PC-9 (cell line): ENCODE measurements at regions of chr6 and their contacts with region 1.

Region 1: DNA sequence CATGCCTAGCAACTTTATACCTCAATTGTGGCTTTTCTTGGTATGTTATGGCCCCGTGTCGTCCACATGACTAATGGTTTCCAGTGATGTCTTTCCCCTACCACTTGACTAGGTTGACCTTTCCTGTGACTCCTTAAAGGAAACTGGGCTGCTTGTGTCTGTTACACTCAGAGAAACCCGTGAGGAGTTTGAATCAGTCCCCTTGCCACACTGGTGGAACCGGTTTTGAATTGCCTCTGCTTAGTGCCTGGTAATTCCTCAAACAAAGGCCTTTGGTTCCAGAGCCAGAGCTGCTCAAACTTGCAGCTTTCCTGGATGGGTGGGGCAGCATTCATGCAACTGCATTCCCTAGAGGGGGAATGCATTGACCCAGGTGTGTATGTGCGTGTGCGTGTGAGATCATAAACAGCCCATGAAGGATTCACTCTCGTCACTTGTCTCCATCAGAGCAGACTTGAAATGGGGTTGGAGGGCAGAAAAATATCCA is 22.0 kb downstream of the ECT2L start:
- DNase-seq: peak; percentile 87 to 100
- H3K4me3 ChIP-seq: peak overlapping the region; percentile 15; the same call in 1 of the 2 replicates
- H3K27ac ChIP-seq: peak overlapping the region; percentile 93
- H3K4me1 ChIP-seq: peaks cover 51% of the 10 kb centered on the region
- H3K27me3 ChIP-seq: no peaks in the 10 kb centered on the region
- CTCF ChIP-seq: no peak

Region 2: DNA sequence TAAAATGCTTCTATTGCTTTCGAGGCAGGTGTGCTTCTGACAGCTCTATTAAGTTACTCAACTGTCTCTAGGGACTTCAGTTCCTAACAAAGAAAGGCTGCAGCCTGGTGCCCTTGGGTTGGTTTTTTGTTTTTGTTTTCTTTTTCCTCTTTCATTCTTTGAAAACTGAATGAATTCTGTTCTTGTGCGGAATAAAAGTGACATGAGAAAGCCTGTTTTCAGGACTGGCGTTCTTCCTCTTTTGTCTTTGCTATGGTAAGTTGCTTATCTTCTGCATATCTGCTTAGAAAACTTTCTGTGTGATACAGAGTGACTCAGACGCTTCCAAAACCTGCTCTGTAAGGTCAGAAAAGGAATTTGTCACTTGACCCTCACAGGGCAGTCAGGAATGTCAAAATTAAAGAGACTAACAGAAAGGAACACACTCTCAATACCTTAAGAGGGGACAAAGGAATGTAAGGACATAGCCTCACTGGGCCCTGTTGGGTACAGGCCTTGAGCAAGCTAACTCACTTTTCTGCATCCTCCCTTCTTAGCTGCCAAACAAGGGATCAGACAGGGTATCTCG is 262.4 kb before region 1 on chr6:
- CTCF ChIA-PET with region 1: interaction called, 16 read pairs
- POLR2A ChIA-PET with region 1: no interaction called
- intact Hi-C with region 1: no loop called
- DNase-seq: peak; percentile 38 to 97
- H3K4me3 ChIP-seq: peak overlapping the region; percentile 23; the same call in 1 of the 2 replicates
- H3K27ac ChIP-seq: peak overlapping the region; percentile 56
- H3K4me1 ChIP-seq: peaks cover 35% of the 10 kb centered on the region
- H3K27me3 ChIP-seq: no peaks in the 10 kb centered on the region
- CTCF ChIP-seq: no peak

Region 3: DNA sequence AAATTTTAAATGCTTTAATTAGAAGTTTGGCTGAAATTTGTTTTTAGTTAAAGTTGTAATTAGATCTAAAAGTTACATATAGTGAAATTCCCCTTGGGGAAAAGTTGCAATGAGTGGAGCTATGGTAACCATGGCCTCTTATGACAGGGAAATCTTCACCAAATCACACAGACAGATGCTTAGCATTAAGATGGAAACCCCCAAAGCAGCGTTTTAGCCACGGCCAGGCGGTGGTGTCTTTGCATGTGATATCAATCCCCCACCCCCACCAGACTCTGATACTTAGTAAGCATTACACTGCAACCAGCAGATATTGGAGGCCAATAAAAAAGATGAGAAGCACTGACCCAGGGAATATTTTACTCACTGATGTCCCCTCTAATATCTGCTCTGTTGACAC is 94.4 kb after region 1 on chr6:
- CTCF ChIA-PET with region 1: no interaction called
- POLR2A ChIA-PET with region 1: no interaction called
- intact Hi-C with region 1: no loop called
- DNase-seq: no peak
- H3K4me3 ChIP-seq: no peak overlapping the region
- H3K27ac ChIP-seq: no peak overlapping the region
- H3K4me1 ChIP-seq: no peaks in the 10 kb centered on the region
- H3K27me3 ChIP-seq: no peaks in the 10 kb centered on the region
- CTCF ChIP-seq: no peak

Region 4: GRCh38 chr6:138923561-138923960 is 105.7 kb after region 1 on chr6:
- CTCF ChIA-PET with region 1: no interaction called
- POLR2A ChIA-PET with region 1: no interaction called
- intact Hi-C with region 1: loop called (anchors 10 kb)
- DNase-seq: no peak
- H3K4me3 ChIP-seq: no peak overlapping the region
- H3K27ac ChIP-seq: no peak overlapping the region
- H3K4me1 ChIP-seq: no peaks in the 10 kb centered on the region
- H3K27me3 ChIP-seq: no peaks in the 10 kb centered on the region
- CTCF ChIP-seq: no peak

Region 5: DNA sequence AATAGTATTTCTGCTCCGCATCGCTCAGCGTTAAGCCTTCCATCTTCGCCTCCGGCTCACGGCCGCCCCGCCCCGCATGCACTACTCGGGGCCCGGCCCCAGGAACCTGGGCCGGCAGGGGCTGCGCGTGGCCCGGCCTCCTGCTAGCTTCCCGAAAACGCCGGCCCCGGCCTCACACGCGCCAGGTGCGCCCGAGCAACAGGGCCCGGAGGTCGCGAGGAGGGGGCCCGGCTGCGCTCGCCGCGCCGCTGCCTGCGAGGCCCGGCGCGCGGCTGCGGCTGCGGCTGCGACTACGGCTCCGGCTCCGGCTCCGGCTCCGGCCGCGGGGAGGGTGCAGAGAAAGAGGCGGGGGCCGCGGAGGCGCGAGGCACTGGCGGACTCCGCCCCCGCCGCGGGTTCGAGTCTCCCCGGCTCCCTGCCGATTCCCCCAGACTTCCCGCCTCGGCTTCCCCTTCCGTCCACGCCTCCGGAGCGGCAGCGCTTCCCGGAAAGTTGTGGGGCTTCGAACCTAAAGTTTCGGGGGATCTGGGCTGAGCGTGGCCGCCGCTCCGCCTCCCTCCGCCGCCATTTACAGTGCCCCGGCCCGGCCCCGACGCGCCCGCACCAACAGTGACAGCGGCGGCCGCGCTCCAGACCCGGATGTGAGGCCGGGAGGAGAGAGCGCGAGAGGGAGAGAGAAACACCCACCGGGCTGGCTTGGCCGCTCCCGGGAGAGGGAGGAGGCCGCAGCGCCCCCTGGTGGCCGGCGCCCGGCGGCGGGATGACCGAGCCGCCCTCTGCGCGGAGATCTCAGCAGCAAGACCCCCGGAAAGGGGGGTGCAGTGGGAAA is 170.0 kb after region 1 on chr6 and contains the start of gene REPS1:
- CTCF ChIA-PET with region 1: no interaction called
- POLR2A ChIA-PET with region 1: no interaction called
- intact Hi-C with region 1: loop called (anchors 1 kb)
- DNase-seq: peak; percentile 74 to 83
- H3K4me3 ChIP-seq: peak within 1 kb of the TSS; percentile 77
- H3K27ac ChIP-seq: peak within 1 kb of the TSS; percentile 70
- H3K4me1 ChIP-seq: peaks cover 42% of the 10 kb centered on the region
- H3K27me3 ChIP-seq: no peaks in the 10 kb centered on the region
- CTCF ChIP-seq: peak; percentile 99
- total RNA-seq, gene REPS1: 32.0 and 39.6 TPM in 2 replicates

Region 6: DNA sequence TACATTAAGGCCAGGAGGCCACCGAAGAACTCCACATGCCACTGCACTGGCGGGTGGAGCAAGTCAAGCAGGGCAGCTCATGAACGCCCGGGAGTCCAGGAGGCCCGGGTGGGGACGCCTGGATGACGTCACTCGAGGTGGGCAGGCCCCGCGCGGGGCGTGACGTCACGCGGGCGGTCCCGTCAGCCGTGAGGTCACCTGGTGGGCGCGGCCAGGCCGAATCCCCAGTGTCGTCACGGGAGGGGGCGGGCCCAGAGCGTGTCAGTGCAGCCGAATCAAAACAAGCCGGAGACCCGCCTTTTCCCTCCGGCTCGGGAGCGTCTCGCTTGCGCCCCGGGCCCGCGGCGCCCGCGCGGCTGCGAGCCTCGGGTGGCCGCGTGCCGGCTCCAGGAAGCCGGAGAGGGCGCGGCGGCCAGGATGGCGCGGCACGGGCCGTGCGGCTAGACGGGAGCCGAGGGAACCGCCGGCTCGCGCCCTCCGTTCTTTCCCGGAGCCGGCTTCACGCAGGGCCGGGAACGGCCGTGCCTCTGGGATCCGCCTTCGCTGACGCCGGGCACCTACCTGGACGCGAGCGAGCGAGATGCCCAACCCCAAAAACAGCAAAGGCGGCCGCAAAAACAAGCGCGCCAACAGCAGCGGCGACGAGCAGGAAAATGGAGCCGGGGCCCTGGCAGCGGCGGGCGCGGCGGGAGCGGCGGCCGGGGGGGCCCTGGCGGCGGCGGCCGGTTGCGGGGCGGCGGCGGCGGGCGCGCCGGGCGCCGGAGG is 317.1 kb after region 1 on chr6 and contains the start of gene HECA:
- CTCF ChIA-PET with region 1: no interaction called
- POLR2A ChIA-PET with region 1: no interaction called
- intact Hi-C with region 1: loop called (anchors 5 kb)
- DNase-seq: peak; percentile 87 to 93
- H3K4me3 ChIP-seq: peak within 1 kb of the TSS; percentile 76
- H3K27ac ChIP-seq: no peak within 1 kb of the TSS
- H3K4me1 ChIP-seq: peaks cover 11% of the 10 kb centered on the region
- H3K27me3 ChIP-seq: no peaks in the 10 kb centered on the region
- CTCF ChIP-seq: no peak
- total RNA-seq, gene HECA: 11.6 and 12.9 TPM in 2 replicates

Region 7: GRCh38 chr6:139219271-139219729 is 401.4 kb after region 1 on chr6:
- CTCF ChIA-PET with region 1: no interaction called
- POLR2A ChIA-PET with region 1: no interaction called
- intact Hi-C with region 1: loop called (anchors 1 kb)
- DNase-seq: peak; percentile 61 to 71
- H3K4me3 ChIP-seq: no peak overlapping the region
- H3K27ac ChIP-seq: no peak overlapping the region
- H3K4me1 ChIP-seq: no peaks in the 10 kb centered on the region
- H3K27me3 ChIP-seq: no peaks in the 10 kb centered on the region
- CTCF ChIP-seq: peak; percentile 86

Region 8: GRCh38 chr6:139364302-139364981 is 546.6 kb after region 1 on chr6:
- CTCF ChIA-PET with region 1: no interaction called
- POLR2A ChIA-PET with region 1: no interaction called
- intact Hi-C with region 1: loop called (anchors 1 kb)
- DNase-seq: peak in 1 of 2 experiments; percentile 65
- H3K4me3 ChIP-seq: no peak overlapping the region
- H3K27ac ChIP-seq: no peak overlapping the region
- H3K4me1 ChIP-seq: peaks cover 9% of the 10 kb centered on the region
- H3K27me3 ChIP-seq: no peaks in the 10 kb centered on the region
- CTCF ChIP-seq: peak; percentile 97